Activated T-helper 2 cell treated with anti-CD3 and anti-CD28 coated beads, Interferon-gamma antibody, Interleukin-2, Interleukin-4, amounts not matched to agents 10 μg/mL and 5 μg/mL and 100 μg/mL, durations not matched to agents 14 hours and 24 hours and 36 hours (primary cell): ENCODE measurements at regions of chr2 and their contacts with region 1.

Region 1: GRCh38 chr2:156332534-156333273 is at the start of gene NR4A2:
- DNase-seq: peak; percentile 84
- H3K4me3 Mint-ChIP-seq: peak within 1 kb of the TSS; percentile 95
- H3K27ac Mint-ChIP-seq: peak within 1 kb of the TSS; percentile 99
- H3K4me1 Mint-ChIP-seq: peaks cover 51% of the 10 kb centered on the region
- H3K27me3 Mint-ChIP-seq: peaks cover 11% of the 10 kb centered on the region
- total RNA-seq, gene NR4A2: 22.1 and 24.0 TPM in 2 replicates

Region 2: GRCh38 chr2:155377266-155377680 is 955.4 kb before region 1 on chr2:
- intact Hi-C with region 1: loop called (anchors 2 kb)
- DNase-seq: no peak
- H3K4me3 Mint-ChIP-seq: no peak overlapping the region
- H3K27ac Mint-ChIP-seq: peak overlapping the region; percentile 73
- H3K4me1 Mint-ChIP-seq: peaks cover 17% of the 10 kb centered on the region
- H3K27me3 Mint-ChIP-seq: peaks cover 9% of the 10 kb centered on the region

Region 3: GRCh38 chr2:156294945-156295580 is 37.6 kb before region 1 on chr2:
- intact Hi-C with region 1: no loop called
- DNase-seq: no peak
- H3K4me3 Mint-ChIP-seq: no peak overlapping the region
- H3K27ac Mint-ChIP-seq: no peak overlapping the region
- H3K4me1 Mint-ChIP-seq: no peaks in the 10 kb centered on the region
- H3K27me3 Mint-ChIP-seq: peaks cover 22% of the 10 kb centered on the region

Region 4: GRCh38 chr2:156385242-156385641 is 52.5 kb after region 1 on chr2:
- intact Hi-C with region 1: loop called (anchors 1 kb)
- DNase-seq: no peak
- H3K4me3 Mint-ChIP-seq: no peak overlapping the region
- H3K27ac Mint-ChIP-seq: peak overlapping the region; percentile 77
- H3K4me1 Mint-ChIP-seq: peaks cover 37% of the 10 kb centered on the region
- H3K27me3 Mint-ChIP-seq: no peaks in the 10 kb centered on the region

Region 5: GRCh38 chr2:156435715-156436496 is 103.2 kb after region 1 on chr2 and contains the start of gene GPD2:
- intact Hi-C with region 1: loop called (anchors 1 kb)
- DNase-seq: peak; percentile 58
- H3K4me3 Mint-ChIP-seq: peak within 1 kb of the TSS; percentile 99
- H3K27ac Mint-ChIP-seq: peak within 1 kb of the TSS; percentile 98
- H3K4me1 Mint-ChIP-seq: peaks cover 43% of the 10 kb centered on the region
- H3K27me3 Mint-ChIP-seq: no peaks in the 10 kb centered on the region
- total RNA-seq, gene GPD2: 23.6 and 23.7 TPM in 2 replicates

Region 6: GRCh38 chr2:156589381-156590079 is 256.8 kb after region 1 on chr2:
- intact Hi-C with region 1: loop called (anchors 1 kb)
- DNase-seq: no peak
- H3K4me3 Mint-ChIP-seq: no peak overlapping the region
- H3K27ac Mint-ChIP-seq: no peak overlapping the region
- H3K4me1 Mint-ChIP-seq: peaks cover 11% of the 10 kb centered on the region
- H3K27me3 Mint-ChIP-seq: no peaks in the 10 kb centered on the region

Region 7: DNA sequence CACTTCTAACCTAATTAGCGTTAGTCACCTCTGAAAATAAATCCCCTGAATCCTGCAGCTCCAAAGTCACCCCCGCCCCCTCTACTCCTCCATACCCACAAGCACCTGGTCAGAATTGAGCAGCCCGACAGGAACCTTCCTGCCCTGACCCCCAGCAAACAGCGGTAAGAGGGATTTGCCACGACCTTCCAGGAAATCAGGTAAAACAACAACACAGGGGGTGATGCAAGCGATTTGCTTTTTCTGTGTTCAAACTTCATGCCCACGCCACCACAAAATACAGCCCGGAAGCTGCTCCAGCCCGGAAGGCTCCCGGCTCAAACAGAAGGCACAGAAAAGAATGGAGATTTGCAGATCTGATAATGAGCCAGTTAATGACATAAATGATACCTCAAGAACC is 470.5 kb after region 1 on chr2:
- intact Hi-C with region 1: no loop called
- DNase-seq: no peak
- H3K4me3 Mint-ChIP-seq: no peak overlapping the region
- H3K27ac Mint-ChIP-seq: no peak overlapping the region
- H3K4me1 Mint-ChIP-seq: no peaks in the 10 kb centered on the region
- H3K27me3 Mint-ChIP-seq: no peaks in the 10 kb centered on the region

Region 8: GRCh38 chr2:157194097-157194688 is 861.5 kb after region 1 on chr2:
- intact Hi-C with region 1: loop called (anchors 5 kb)
- DNase-seq: no peak
- H3K4me3 Mint-ChIP-seq: no peak overlapping the region
- H3K27ac Mint-ChIP-seq: no peak overlapping the region
- H3K4me1 Mint-ChIP-seq: peaks cover 20% of the 10 kb centered on the region
- H3K27me3 Mint-ChIP-seq: peaks cover 14% of the 10 kb centered on the region

Region 9: DNA sequence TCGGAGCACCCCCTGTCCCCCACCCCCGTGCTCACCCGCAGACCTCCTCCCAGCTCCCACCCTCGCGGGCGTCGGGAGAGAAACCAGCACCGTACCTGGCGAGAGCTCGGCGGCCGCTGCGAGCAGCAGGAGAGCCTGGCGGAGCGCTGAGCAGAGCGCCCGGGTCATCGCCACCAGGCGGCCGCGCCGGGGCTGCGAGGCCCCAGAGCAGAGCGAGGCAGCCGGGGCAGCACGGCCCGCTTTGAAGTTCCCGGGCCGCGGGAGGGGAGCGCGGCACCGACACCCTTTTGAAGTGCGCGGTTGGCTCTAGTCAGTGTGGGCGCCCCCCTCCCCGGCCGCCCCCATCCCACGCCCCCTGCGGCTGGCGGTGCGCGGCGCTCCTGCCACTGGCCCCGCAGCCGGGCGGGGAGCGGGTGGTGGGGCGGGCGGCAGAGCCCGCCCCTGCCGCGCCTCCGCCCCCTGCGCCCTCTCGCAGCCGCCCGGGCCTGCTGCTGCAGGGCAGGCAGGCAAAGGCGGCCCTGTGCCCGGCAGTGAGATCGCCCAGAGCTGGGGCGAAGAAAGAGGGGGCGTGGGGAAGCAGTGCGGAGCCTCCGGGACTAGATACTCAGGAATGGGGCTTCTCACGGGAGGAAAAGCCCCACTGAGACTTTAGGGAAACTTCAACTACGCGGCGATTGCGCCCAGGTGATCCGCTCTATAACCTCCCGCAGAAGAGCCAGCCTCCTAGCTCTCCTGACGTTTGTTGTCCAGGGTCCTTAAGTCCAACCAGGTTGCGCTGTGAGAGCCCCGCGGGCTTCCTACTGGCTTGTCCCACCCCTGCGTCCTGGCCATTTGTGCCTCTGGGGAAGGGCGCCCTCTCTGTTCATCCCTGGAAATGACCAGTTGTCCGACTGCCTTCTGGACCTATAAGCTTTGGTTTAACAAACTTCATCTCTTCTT is 1296.0 kb after region 1 on chr2 and contains the start of gene ACVR1C:
- intact Hi-C with region 1: loop called (anchors 5 kb)
- DNase-seq: peak; percentile 65
- H3K4me3 Mint-ChIP-seq: peak within 1 kb of the TSS; percentile 83
- H3K27ac Mint-ChIP-seq: no peak within 1 kb of the TSS
- H3K4me1 Mint-ChIP-seq: peaks cover 22% of the 10 kb centered on the region
- H3K27me3 Mint-ChIP-seq: peaks cover 15% of the 10 kb centered on the region
- total RNA-seq, gene ACVR1C: 0.57 and 0.94 TPM in 2 replicates